ENCODE measurements at regions of chr1 and their contacts with region 1.

Region 1: DNA sequence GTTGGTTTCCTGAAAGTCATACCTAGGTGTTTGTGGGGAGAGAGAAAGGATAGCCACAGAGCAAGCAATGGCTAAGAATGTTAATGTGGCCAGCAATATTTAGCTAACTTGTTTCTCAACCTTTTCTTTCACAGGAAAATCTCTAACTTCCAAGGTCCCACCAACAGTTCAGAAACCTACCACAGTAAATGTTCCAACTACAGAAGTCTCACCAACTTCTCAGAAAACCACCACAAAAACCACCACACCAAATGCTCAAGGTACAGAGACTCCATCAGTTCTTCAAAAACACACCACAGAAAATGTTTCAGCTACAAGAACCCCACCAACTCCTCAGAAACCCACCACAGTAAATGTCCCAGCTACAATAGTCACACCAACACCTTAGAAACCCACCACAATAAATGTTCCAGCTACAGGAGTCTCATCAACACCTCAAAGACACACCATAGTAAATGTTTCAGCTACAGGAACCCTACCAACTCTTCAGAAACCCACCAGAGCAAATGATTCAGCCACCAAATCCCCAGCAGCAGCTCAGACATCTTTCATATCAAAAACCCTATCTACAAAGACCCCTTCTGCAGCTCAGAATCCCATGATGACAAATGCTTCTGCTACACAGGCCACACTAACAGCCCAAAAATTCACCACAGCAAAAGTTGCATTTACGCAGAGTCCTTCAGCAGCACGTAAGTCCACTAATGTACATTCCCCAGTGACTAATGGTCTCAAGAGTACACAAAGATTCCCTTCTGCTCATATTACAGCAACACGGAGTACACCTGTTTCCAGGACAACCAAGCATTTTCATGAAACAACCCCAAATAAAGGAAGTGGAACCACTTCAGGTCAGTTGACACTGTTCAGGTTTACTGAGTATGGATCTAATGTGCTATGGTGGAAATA is 15.3 kb downstream of the CD55 start:
- DNase-seq: peak; percentile 90
- H3K4me3 Mint-ChIP-seq: peak overlapping the region; percentile 71
- H3K27ac Mint-ChIP-seq: peak overlapping the region; percentile 95
- H3K4me1 Mint-ChIP-seq: peaks cover 65% of the 10 kb centered on the region
- H3K27me3 Mint-ChIP-seq: no peaks in the 10 kb centered on the region

Region 2: DNA sequence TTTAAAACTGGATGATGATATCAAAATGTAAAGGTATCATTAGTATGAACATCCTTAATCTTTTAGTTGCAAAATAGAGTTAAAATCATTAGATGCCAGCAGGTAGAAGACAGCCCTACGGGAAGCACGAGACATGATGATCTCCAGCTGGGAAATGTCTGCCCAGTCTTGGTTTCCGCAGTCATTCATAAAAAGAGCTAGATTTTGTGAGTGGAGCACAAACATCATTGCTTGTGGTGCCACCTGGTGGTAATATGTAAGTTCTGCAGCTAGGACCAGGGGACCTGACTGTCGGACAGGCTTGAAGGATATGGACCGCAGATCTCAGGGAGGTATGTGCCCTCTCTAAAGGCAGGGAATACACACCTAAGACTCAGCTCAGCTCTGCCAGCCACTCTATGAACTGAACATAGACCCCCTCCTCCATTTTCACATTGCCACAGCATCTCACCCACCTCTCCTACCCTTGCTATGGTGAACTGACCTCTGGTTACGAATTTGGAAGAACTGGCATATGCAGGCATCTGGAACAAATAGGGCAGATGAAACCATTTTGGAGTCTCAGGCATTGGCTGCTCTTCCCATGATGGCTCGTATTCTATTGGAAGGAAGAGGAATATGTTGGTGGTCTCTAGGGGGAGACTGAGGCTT is 424.2 kb before region 1 on chr1:
- intact Hi-C with region 1: loop called (anchors 5 kb)
- DNase-seq: peak; percentile 91
- H3K4me3 Mint-ChIP-seq: no peak overlapping the region
- H3K27ac Mint-ChIP-seq: no peak overlapping the region
- H3K4me1 Mint-ChIP-seq: peaks cover 59% of the 10 kb centered on the region
- H3K27me3 Mint-ChIP-seq: peaks cover 3% of the 10 kb centered on the region

Region 3: DNA sequence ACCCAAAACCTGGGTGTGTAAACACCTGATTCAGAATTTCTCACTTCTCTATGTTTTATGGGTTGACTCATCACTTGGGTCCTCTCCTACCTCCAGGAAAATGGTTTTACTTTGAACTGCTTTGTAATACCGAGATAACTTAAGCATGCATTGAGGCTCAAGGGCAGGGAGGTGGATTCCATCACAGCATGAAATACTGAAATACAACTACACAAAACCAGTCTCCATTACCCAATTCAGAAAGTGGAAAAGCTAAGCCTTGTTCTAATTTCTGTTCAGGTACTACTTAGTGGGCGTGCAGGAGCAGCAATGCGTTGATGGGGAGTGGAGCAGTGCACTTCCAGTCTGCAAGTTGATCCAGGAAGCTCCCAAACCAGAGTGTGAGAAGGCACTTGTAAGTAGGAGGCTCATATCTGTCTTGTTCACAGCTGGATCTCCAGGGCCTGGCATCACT is 238.9 kb before region 1 on chr1:
- intact Hi-C with region 1: loop called (anchors 1 kb)
- DNase-seq: peak; percentile 75
- H3K4me3 Mint-ChIP-seq: peak overlapping the region; percentile 29
- H3K27ac Mint-ChIP-seq: peak overlapping the region; percentile 86
- H3K4me1 Mint-ChIP-seq: peaks cover 23% of the 10 kb centered on the region
- H3K27me3 Mint-ChIP-seq: peaks cover 9% of the 10 kb centered on the region

Region 4: GRCh38 chr1:207362962-207363858 is 26.4 kb after region 1 on chr1:
- intact Hi-C with region 1: loop called (anchors 1 kb)
- DNase-seq: peak; percentile 79
- H3K4me3 Mint-ChIP-seq: no peak overlapping the region
- H3K27ac Mint-ChIP-seq: no peak overlapping the region
- H3K4me1 Mint-ChIP-seq: peaks cover 3% of the 10 kb centered on the region
- H3K27me3 Mint-ChIP-seq: no peaks in the 10 kb centered on the region

Region 5: GRCh38 chr1:207404849-207405525 is 68.2 kb after region 1 on chr1:
- intact Hi-C with region 1: loop called (anchors 1 kb)
- DNase-seq: peak; percentile 69
- H3K4me3 Mint-ChIP-seq: no peak overlapping the region
- H3K27ac Mint-ChIP-seq: no peak overlapping the region
- H3K4me1 Mint-ChIP-seq: peaks cover 18% of the 10 kb centered on the region
- H3K27me3 Mint-ChIP-seq: no peaks in the 10 kb centered on the region

Region 6: DNA sequence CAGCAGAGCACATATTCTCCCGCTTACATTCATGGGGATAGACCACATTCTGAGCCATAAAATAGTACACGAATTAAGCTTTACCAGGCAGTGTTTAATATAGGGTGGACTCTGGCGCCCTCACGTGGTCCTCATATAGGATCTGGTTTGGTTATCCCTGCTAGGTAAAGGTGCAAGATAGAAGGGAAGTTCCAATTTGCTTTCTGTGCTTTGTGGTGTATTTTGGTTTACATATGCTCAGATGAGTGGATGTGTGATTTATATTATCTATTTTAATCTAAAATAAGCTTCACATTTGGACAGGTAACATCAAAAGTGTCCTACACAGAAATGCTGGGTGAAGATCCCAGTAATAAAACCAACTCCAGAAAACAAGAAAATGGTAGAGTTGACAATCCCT is 162.8 kb after region 1 on chr1:
- intact Hi-C with region 1: loop called (anchors 2 kb)
- DNase-seq: peak; percentile 87
- H3K4me3 Mint-ChIP-seq: no peak overlapping the region
- H3K27ac Mint-ChIP-seq: peak overlapping the region; percentile 39
- H3K4me1 Mint-ChIP-seq: peaks cover 13% of the 10 kb centered on the region
- H3K27me3 Mint-ChIP-seq: peaks cover 52% of the 10 kb centered on the region

Measured in activated CD4-positive, alpha-beta T cell treated with anti-CD3 and anti-CD28 coated beads, Interleukin-2, amount 10 ng/mL, durations not matched to agents 24 days and 14 days (primary cell).